AG04449 (cell line): ENCODE measurements at regions of chr3 and their contacts with region 1.

Region 1: DNA sequence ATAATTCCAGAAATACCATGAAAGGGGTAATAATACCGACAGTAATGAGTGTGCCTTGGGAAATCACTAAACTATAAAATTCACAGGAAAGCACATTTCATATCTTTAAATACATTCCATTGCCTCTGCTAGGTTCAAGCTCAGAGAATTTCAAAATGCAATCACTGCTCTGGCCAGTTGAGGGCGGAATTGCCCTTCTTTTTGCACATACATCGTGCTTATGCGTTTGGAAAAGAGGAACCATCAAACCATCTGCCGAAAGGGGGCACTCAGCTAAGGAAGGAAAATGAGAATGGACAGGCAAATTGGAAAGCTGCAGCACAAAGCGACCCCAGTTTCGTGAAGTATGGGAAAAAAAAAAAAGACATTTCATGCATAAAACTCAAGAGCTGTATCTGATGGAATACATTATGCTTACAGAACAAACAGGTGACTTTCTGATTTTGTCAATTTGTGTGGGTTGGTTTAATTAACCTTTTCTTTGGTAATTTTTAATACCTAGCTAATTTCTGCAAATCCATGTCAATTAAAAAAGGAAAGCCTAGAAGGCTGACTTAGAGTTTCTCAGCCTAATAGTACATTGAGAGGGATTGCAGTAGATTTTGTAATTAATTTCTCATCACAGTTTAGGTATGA is 61.4 kb downstream of the TUSC7 start:
- DNase-seq: peak; percentile 17
- H3K4me3 ChIP-seq: no peak overlapping the region
- CTCF ChIP-seq: peak; percentile 90

Region 2: GRCh38 chr3:116445311-116445841 is 325.6 kb before region 1 on chr3 and contains the start of gene LSAMP:
- CTCF ChIA-PET with region 1: no interaction called
- POLR2A ChIA-PET with region 1: no interaction called
- DNase-seq: no peak
- H3K4me3 ChIP-seq: peak within 1 kb of the TSS; percentile 64
- CTCF ChIP-seq: no peak

Region 3: GRCh38 chr3:116757315-116757714 is 13.6 kb before region 1 on chr3:
- CTCF ChIA-PET with region 1: interaction called, 14 read pairs
- POLR2A ChIA-PET with region 1: no interaction called
- DNase-seq: no peak
- H3K4me3 ChIP-seq: no peak overlapping the region
- CTCF ChIP-seq: no peak

Region 4: DNA sequence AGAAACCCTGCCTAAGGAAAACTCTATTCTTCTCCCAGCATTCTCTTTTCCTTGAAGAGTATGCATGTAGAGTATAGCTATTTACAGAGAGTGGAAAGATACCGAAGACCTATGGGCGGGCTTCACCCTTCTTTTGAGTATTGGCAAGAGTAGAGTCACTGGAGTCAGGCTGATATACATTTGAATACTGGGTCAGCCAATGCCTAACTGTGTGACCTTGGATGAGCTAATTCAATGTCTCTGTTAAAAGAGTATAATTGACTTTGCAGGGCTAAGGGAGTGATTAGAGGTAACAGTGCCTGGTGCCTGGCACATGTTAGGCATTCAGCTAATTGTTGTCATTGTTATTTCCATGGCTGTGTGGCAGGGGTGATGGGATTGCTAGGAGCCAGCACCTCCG is 14.3 kb after region 1 on chr3:
- CTCF ChIA-PET with region 1: interaction called, 11 read pairs
- POLR2A ChIA-PET with region 1: no interaction called
- DNase-seq: no peak
- H3K4me3 ChIP-seq: no peak overlapping the region
- CTCF ChIP-seq: no peak

Region 5: GRCh38 chr3:116984301-116984700 is 213.4 kb after region 1 on chr3:
- CTCF ChIA-PET with region 1: no interaction called
- POLR2A ChIA-PET with region 1: no interaction called
- DNase-seq: no peak
- H3K4me3 ChIP-seq: no peak overlapping the region
- CTCF ChIP-seq: no peak

Region 6: DNA sequence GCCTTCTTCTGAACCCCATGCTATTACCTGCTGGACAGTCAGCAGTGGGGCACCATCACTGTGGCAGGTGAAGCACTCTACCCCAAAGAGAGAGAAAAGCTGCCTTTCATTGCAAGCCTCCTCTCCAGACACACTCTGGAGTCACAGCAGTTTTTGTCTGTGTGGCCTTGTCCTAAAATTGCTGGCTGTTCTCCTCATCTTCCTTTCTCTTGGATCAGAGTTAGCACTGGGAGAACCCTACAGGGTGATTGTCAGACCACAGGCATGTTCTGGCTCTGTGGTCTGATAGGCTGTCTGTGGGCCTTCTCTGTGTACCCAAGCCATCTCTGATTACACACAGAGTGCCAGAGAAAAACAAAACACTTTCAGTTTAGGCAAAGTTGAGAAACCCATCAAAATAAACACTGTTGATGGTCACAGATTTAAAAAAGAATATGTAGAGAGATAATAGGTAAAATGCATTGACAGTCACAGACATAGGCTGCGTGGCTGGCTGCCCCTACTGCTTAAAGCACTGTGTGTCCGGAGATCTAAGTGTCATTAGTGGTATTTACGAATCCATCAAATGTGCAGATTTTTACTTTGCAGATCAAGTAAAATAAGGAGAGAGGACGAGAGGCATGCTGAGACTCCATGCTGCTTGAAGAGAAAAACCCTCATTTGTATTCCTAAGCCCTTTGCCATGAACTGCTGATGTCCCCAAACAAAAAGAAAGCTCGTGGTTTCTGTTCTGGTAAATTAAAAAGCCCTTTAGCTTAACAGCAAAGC is 628.6 kb after region 1 on chr3:
- CTCF ChIA-PET with region 1: no interaction called
- POLR2A ChIA-PET with region 1: no interaction called
- DNase-seq: no peak
- H3K4me3 ChIP-seq: no peak overlapping the region
- CTCF ChIP-seq: no peak

Region 7: GRCh38 chr3:118628704-118629341 is 1857.9 kb after region 1 on chr3:
- CTCF ChIA-PET with region 1: interaction called, 22 read pairs
- POLR2A ChIA-PET with region 1: no interaction called
- DNase-seq: peak; percentile 4
- H3K4me3 ChIP-seq: no peak overlapping the region
- CTCF ChIP-seq: peak; percentile 84